Activated CD4-positive, alpha-beta T cell treated with anti-CD3 and anti-CD28 coated beads for 36 hours (primary cell): ENCODE measurements at regions of chr16 and their contacts with region 1.

Region 1: GRCh38 chr16:1351582-1352362 is at the starts of genes GNPTG and TSR3:
- DNase-seq: peak; percentile 91
- ATAC-seq: peak; percentile 87
- H3K4me3 Mint-ChIP-seq: peak within 1 kb of the TSS; percentile 85
- H3K27ac Mint-ChIP-seq: peak within 1 kb of the TSS; percentile 79
- H3K4me1 Mint-ChIP-seq: peaks cover 37% of the 10 kb centered on the region
- H3K27me3 Mint-ChIP-seq: no peaks in the 10 kb centered on the region
- total RNA-seq, gene GNPTG: 16.3 to 17.4 TPM
- total RNA-seq, gene TSR3: 37.6 to 58.7 TPM

Region 2: GRCh38 chr16:1413684-1414531 is 62.1 kb after region 1 on chr16:
- CTCF ChIA-PET with region 1: no interaction called
- POLR2A ChIA-PET with region 1: no interaction called
- intact Hi-C with region 1: loop called in 1 of 2 experiments (anchors 2 kb)
- DNase-seq: peak; percentile 85
- ATAC-seq: peak; percentile 72
- H3K4me3 Mint-ChIP-seq: peak overlapping the region; percentile 81
- H3K27ac Mint-ChIP-seq: peak overlapping the region; percentile 81
- H3K4me1 Mint-ChIP-seq: peaks cover 24% of the 10 kb centered on the region
- H3K27me3 Mint-ChIP-seq: no peaks in the 10 kb centered on the region

Region 3: GRCh38 chr16:1474796-1475551 is 123.2 kb after region 1 on chr16 and contains the start of gene CLCN7:
- CTCF ChIA-PET with region 1: no interaction called
- POLR2A ChIA-PET with region 1: no interaction called
- intact Hi-C with region 1: loop called in 1 of 2 experiments (anchors 2 kb)
- DNase-seq: peak; percentile 95
- ATAC-seq: peak; percentile 91
- H3K4me3 Mint-ChIP-seq: peak within 1 kb of the TSS; percentile 73
- H3K27ac Mint-ChIP-seq: peak within 1 kb of the TSS; percentile 81
- H3K4me1 Mint-ChIP-seq: peaks cover 22% of the 10 kb centered on the region
- H3K27me3 Mint-ChIP-seq: no peaks in the 10 kb centered on the region
- total RNA-seq, gene CLCN7: 29.9 to 33.7 TPM